Ascending aorta (tissue), 2 donors: ENCODE measurements at regions of chr18 and their contacts with region 1.

Region 1: GRCh38 chr18:7272311-7273049 is 41.6 kb downstream of the LRRC30 start:
- DNase-seq: peak in 1 of 2 donors; percentile 72
- H3K4me3 ChIP-seq: peak overlapping the region in 1 of 2 donors; percentile 46
- H3K27ac ChIP-seq: peak overlapping the region; percentile 17 to 32
- H3K4me1 ChIP-seq: peaks cover 0 to 8% of the 10 kb centered on the region in 2 donors
- H3K27me3 ChIP-seq: no peaks in the 10 kb centered on the region
- CTCF ChIP-seq: peak; percentile 27 to 69 (median 48)

Region 2: GRCh38 chr18:7497081-7497480 is 224.6 kb after region 1 on chr18:
- intact Hi-C with region 1: no loop called
- DNase-seq: no peak
- H3K4me3 ChIP-seq: no peak overlapping the region
- H3K27ac ChIP-seq: no peak overlapping the region
- H3K4me1 ChIP-seq: no peaks in the 10 kb centered on the region
- H3K27me3 ChIP-seq: no peaks in the 10 kb centered on the region
- CTCF ChIP-seq: no peak

Region 3: DNA sequence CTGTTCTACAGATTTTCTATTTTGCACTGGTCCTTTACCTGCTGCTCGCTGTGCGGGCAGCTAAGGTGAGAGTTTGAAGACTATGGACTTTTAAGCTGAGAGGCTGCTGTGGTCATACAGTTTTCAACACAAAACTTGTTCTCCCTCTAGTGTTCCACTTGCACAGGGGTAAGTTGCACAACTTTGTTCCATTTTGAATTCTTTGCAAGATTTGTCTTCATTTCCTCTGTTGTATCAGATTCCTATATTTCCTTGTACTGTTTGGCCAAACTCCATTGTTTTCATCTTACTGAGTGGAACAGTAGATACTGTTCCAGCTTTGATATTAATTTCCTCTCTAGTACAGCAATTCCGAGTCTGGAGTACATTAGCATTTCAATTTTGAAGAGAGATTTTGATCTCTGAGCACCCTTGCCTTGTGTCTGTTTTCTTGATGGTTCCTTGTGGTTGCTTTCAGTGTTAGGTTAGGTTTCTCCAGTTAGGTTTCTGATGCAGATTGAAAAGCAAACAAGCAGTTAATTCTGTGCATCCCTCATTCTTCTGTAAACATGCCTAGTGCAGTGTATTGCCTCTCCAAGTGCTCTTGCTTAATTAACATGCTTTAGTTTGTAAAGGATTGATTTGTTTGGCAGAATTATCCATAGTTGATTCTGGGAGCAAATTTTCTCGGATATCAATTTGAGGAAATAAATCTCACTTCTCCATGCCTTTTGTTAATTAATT is 483.4 kb after region 1 on chr18:
- intact Hi-C with region 1: loop called (anchors 10 kb)
- DNase-seq: no peak
- H3K4me3 ChIP-seq: no peak overlapping the region
- H3K27ac ChIP-seq: no peak overlapping the region
- H3K4me1 ChIP-seq: peaks cover 0 to 24% of the 10 kb centered on the region in 2 donors
- H3K27me3 ChIP-seq: no peaks in the 10 kb centered on the region
- CTCF ChIP-seq: peak in 1 of 3 experiments; percentile 49

Region 4: DNA sequence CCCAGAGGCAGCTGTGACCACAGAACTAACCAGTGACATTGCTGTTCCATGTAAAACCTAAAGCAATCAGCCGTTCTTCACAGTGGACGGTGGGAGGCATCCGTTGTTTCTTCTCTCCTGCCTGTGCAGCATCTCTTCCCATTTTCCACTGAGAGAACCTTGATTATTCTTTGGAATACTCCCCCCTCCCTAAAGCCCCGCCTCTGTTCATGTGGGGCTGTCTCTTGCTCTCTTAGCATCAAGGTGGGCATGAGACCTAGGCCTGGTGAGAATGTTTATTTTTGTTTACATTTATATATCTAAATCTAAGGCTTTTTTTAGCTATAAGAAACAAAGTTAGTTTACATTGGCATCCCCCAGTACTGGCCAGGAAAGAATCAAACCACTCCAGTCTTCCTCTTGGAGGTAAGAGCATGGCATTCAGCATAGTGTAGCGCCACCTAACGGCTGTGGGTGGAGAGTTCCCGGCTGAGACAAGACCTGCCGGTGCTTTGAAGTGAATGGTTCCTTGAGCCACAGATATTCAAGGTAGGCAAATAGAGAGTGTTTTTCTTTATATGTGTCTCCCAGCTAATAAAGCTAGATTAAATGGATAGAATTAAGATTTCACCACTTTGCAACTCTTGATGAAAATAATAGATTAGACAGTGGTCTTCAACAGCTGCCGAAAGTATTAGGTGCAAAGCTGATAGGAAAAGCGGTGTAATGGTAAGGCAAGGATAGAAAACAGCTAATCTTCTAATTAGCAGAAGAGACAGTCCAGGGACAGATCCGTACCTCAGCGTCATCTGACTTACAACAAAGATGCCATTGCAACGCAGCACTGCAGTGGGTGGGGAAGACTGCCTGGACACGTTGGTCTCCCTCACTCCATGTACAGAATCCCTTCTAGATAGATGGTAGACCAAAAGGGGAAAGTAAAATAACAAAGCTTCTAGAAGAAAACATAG is 1117.2 kb after region 1 on chr18:
- intact Hi-C with region 1: loop called (anchors 5 kb)
- DNase-seq: no peak
- H3K4me3 ChIP-seq: no peak overlapping the region
- H3K27ac ChIP-seq: no peak overlapping the region
- H3K4me1 ChIP-seq: no peaks in the 10 kb centered on the region
- H3K27me3 ChIP-seq: no peaks in the 10 kb centered on the region
- CTCF ChIP-seq: peak; percentile 33 to 70 (median 70)